OCI-LY7 (cell line): ENCODE measurements at regions of chr10 and their contacts with region 1.

Region 1: GRCh38 chr10:17742918-17743317 is 9.1 kb upstream of the TMEM236 start:
- DNase-seq: peak; percentile 69
- H3K4me3 ChIP-seq: peak overlapping the region; percentile 43
- H3K27ac ChIP-seq: no peak overlapping the region
- H3K4me1 ChIP-seq: peaks cover 13% of the 10 kb centered on the region
- CTCF ChIP-seq: peak; percentile 85

Region 2: DNA sequence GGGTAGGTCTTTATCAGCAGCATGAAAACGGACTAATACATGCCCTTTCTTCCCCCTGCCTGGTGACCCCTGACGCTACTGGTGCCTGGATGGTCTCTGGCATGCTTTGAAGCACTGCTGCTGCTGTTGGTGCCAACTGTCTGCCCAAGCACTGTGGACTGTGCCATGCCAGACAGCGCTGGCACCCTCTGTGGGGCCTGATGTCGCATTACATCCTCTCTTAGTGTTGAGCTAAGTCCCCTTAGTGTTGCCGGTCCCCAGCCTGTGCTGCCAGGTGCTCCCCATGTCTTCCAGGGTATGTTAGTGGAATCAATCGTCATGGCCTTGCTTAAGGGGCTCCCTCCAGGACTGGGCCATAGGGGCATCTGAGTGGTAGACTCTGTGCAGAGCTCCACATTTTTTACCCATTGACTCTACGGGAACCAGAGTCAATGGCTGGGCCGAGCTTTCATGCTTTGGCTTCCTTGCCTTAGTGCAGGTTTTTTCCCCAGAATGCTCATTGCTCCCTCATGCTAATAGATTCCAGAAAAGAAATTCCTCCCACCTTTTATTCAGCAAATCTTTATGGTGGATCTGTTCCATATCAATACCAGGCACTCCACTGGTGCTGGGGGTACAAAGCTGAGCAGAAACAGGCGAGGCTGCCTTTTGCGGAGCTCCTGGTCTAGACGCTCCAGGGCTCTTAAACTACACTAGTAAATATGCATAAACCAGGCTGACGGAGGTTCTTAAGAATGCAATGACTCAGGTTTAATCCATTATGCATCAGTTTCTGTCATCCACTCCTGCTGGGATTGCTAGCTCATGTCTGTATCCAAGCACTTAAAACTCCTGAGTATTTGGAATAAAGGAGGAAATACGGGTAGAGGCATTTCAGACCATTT is 44.4 kb after region 1 on chr10:
- CTCF ChIA-PET with region 1: no interaction called
- POLR2A ChIA-PET with region 1: no interaction called
- intact Hi-C with region 1: no loop called
- DNase-seq: no peak
- H3K4me3 ChIP-seq: no peak overlapping the region
- H3K27ac ChIP-seq: no peak overlapping the region
- H3K4me1 ChIP-seq: no peaks in the 10 kb centered on the region
- CTCF ChIP-seq: no peak

Region 3: GRCh38 chr10:18144928-18145327 is 402.0 kb after region 1 on chr10:
- CTCF ChIA-PET with region 1: no interaction called
- POLR2A ChIA-PET with region 1: no interaction called
- intact Hi-C with region 1: no loop called
- DNase-seq: no peak
- H3K4me3 ChIP-seq: no peak overlapping the region
- H3K27ac ChIP-seq: no peak overlapping the region
- H3K4me1 ChIP-seq: no peaks in the 10 kb centered on the region
- CTCF ChIP-seq: no peak

Region 4: GRCh38 chr10:18214691-18215563 is 472.0 kb after region 1 on chr10:
- CTCF ChIA-PET with region 1: no interaction called
- POLR2A ChIA-PET with region 1: no interaction called
- intact Hi-C with region 1: loop called (anchors 10 kb)
- DNase-seq: peak; percentile 6
- H3K4me3 ChIP-seq: no peak overlapping the region
- H3K27ac ChIP-seq: no peak overlapping the region
- H3K4me1 ChIP-seq: no peaks in the 10 kb centered on the region
- CTCF ChIP-seq: peak; percentile 67